ENCODE measurements at regions of chr2 and their contacts with region 1.

Region 1: GRCh38 chr2:64859312-64860212 is 129.6 kb upstream of the SLC1A4 start:
- DNase-seq: peak; percentile 93 to 98
- ATAC-seq: peak; percentile 85 to 86
- H3K4me3 ChIP-seq: peak overlapping the region; percentile 55 to 74 (median 58)
- H3K27ac ChIP-seq: peak overlapping the region; percentile 87 to 98 (median 96)
- H3K4me1 ChIP-seq: peaks cover 26 to 38% of the 10 kb centered on the region in 2 donors
- H3K27me3 ChIP-seq: no peaks in the 10 kb centered on the region
- CTCF ChIP-seq: peak in 2 of 5 experiments; percentile 8 to 26
- POLR2A ChIP-seq: peak; percentile 32 to 54

Region 2: GRCh38 chr2:64595397-64596160 is 264.0 kb before region 1 on chr2:
- in situ Hi-C with region 1: loop called (anchors 5 to 25 kb)
- intact Hi-C with region 1: no loop called
- DNase-seq: no peak
- ATAC-seq: no peak
- H3K4me3 ChIP-seq: no peak overlapping the region
- H3K27ac ChIP-seq: no peak overlapping the region
- H3K4me1 ChIP-seq: peaks cover 0 to 8% of the 10 kb centered on the region in 2 donors
- H3K27me3 ChIP-seq: no peaks in the 10 kb centered on the region
- CTCF ChIP-seq: peak in 2 of 5 experiments; percentile 19 to 44
- POLR2A ChIP-seq: no peak

Region 3: DNA sequence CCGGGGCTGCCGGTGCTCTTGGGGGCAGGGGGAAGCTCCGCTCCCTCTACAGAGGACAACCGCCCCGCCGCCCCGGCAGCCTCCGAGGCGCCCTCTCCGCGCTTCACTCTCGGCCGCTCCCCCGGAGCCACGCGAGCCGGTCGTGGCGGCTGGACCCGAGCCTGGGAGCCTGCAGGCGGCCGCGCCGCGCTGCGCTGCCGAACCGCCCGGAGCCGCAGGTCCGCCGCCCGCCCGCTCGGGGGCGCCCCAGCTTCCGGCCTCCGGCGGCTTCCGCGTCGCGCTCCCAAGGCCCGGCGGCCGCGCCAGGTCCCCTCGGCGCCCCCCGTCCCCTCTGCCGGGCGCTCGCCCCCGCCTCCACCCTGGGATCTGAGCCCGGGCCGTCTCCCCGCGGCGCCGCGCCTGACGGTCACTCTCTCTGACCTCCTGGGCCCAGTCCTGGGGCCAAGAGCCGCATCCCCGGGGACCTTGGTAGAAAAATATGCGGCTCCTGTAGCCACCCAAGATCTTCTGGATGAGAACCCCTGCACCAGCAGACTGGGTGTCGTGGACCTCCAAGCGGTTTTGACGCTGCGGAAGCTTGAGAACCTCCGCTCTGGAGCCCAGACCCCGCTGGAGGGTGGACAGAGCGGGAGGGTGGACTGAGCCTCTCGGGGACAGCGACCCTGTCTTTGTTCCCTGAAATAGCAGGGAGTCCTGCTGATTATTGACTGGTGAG is 250.2 kb before region 1 on chr2:
- in situ Hi-C with region 1: loop called in 1 of 4 experiments (anchors 25 kb)
- intact Hi-C with region 1: loop called (anchors 5 kb)
- DNase-seq: peak in 1 of 2 donors; percentile 34
- ATAC-seq: peak; percentile 76 to 79
- H3K4me3 ChIP-seq: peak overlapping the region; percentile 59 to 85 (median 66)
- H3K27ac ChIP-seq: peak overlapping the region; percentile 65 to 83 (median 77)
- H3K4me1 ChIP-seq: peaks cover 8 to 11% of the 10 kb centered on the region in 2 donors
- H3K27me3 ChIP-seq: no peaks in the 10 kb centered on the region
- CTCF ChIP-seq: peak in 4 of 5 experiments; percentile 71 to 76 (median 74)
- POLR2A ChIP-seq: peak in 1 of 2 donors; percentile 24

Region 4: DNA sequence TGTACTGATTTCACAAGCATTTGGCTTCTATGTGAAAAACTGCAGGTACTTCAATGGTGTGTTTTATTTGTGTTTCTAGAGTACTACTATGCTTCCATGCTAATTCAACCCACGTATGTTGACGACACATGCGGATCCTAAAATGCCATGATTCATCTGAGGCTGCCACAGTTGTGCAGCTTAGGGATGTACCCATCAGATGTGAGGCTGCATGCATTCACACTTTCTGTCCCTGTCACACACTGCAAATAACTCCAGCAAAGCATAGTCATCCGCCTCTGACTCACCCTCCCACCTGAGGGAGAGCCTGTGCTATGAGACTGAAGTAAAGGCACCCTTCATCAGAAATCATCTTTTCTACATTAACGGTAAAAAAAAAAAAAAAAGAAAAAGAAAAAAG is 183.7 kb before region 1 on chr2:
- in situ Hi-C with region 1: no loop called
- intact Hi-C with region 1: no loop called
- DNase-seq: peak in 1 of 2 donors; percentile 21
- ATAC-seq: peak; percentile 50 to 56
- H3K4me3 ChIP-seq: no peak overlapping the region
- H3K27ac ChIP-seq: no peak overlapping the region
- H3K4me1 ChIP-seq: peaks cover 10 to 15% of the 10 kb centered on the region in 2 donors
- H3K27me3 ChIP-seq: no peaks in the 10 kb centered on the region
- CTCF ChIP-seq: no peak
- POLR2A ChIP-seq: no peak

Region 5: DNA sequence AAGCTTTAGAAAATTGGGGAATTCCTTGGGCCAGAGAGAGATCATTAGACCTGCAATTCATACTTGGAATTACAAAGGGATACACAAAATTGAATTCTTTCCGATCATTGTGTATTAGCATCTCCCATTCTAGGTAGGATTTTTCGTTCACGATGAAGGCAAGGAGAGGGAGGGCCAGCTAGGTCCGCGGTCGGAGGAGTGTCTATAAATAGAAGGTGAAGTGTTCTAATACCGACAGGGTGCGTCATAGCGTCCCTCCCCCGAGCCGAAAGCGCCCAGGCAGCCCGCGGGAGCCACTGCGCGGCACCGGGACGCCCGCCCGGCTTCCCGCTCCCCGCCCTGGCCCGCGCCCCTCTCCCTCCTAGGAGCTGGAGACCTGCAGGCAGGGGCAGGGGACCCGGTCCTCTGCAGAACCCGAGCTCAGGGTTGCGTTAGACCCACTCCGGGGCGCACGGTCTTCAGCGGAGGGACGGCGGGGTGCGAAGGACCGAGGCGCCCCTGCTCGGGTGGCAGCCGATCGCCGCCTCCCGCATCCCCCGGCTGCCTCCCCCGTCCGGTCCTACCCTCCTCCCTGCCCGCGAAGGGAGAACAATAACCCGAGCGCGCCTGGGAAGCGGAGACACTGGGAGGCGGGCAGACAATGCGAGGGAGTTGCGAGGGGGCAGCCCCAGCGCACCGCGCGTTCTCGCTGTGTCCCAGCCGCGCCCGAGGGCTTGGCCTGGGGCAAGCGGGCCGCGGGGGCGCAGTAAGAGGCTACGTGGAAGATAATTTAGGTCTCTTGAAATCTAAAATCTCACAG is 91.7 kb before region 1 on chr2:
- in situ Hi-C with region 1: loop called in 1 of 4 experiments (anchors 10 kb)
- intact Hi-C with region 1: loop called (anchors 1 kb)
- DNase-seq: peak; percentile 88 to 89
- ATAC-seq: peak; percentile 98
- H3K4me3 ChIP-seq: peak overlapping the region; percentile 77 to 91 (median 84)
- H3K27ac ChIP-seq: peak overlapping the region; percentile 93 to 99 (median 97)
- H3K4me1 ChIP-seq: peaks cover 4 to 13% of the 10 kb centered on the region in 2 donors
- H3K27me3 ChIP-seq: no peaks in the 10 kb centered on the region
- CTCF ChIP-seq: peak in 1 of 5 experiments; percentile 10
- POLR2A ChIP-seq: peak; percentile 89 to 90